ENCODE measurements at regions of chr7 and their contacts with region 1.

Region 1: DNA sequence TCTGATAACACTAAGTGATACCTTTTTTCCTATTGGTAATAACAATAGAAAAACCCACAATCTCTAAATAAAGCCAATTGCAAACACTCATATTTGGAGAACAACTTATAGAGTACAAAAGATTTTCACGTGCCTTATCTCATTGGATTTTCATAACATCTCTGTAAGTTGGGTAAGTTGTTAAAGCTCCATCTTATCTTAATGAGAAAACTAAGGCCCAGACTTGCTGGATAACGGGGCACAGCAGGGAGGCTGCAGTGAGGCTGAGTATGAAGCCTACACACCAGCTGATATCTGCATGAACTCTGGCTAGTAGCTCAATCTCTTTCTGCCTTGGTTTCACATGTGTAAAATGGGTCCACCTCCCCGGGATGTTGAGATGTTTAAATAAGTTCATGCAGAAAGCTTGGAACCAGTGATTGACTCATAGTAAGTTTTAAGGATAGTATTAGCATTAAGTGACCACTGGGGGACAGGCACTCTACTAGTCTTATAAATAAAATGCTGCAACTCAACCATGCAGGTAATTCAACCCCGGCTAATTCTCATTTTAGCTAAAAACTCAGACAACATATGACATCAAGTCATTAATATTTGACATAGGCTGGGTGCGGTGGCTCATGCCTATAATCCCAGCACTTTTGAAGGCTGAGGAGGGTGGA is 26.7 kb downstream of the CPVL start:
- DNase-seq: no peak
- H3K4me3 ChIP-seq: no peak overlapping the region
- H3K27ac ChIP-seq: no peak overlapping the region
- H3K4me1 ChIP-seq: peaks cover 9% of the 10 kb centered on the region
- H3K27me3 ChIP-seq: no peaks in the 10 kb centered on the region
- CTCF ChIP-seq: no peak
- POLR2A ChIP-seq: no peak

Region 2: DNA sequence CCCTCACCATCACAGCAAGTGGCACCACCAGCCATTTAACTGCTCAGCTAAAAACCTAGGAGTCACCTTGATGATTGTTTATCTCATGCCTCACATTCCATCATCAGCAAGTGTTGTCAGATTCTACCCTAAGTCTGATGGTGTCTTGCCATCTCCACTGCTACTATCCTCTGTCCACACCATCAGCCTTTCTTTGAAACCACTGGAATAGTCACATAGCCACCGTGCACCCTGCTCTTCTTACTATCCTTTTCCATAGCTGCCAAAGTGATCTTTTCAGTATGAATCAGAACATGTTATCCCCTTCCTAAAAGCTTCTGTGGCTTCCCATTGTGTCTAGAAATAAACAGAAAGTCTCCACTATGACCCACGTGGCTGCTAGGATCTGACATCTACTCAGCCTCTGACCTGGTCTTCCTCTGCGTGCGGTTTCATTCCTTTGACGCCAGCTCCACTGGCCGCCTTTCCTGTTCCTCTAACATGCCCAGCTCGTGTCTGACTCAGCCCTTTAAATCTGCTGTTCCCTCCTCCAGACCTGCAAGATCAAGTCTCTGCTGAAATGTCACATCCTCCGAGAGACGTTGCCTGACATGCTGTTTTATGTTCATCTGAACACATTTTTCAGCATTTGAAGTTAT is 58.4 kb after region 1 on chr7:
- CTCF ChIA-PET with region 1: no interaction called
- POLR2A ChIA-PET with region 1: no interaction called
- dilution Hi-C with region 1: no loop called
- intact Hi-C with region 1: loop called (anchors 5 kb)
- DNase-seq: peak; percentile 90
- H3K4me3 ChIP-seq: no peak overlapping the region
- H3K27ac ChIP-seq: peak overlapping the region; percentile 37
- H3K4me1 ChIP-seq: peaks cover 9% of the 10 kb centered on the region
- H3K27me3 ChIP-seq: no peaks in the 10 kb centered on the region
- CTCF ChIP-seq: no peak
- POLR2A ChIP-seq: no peak